Astrocyte of the cerebellum (primary cell): ENCODE measurements at regions of chr5 and their contacts with region 1.

Region 1: DNA sequence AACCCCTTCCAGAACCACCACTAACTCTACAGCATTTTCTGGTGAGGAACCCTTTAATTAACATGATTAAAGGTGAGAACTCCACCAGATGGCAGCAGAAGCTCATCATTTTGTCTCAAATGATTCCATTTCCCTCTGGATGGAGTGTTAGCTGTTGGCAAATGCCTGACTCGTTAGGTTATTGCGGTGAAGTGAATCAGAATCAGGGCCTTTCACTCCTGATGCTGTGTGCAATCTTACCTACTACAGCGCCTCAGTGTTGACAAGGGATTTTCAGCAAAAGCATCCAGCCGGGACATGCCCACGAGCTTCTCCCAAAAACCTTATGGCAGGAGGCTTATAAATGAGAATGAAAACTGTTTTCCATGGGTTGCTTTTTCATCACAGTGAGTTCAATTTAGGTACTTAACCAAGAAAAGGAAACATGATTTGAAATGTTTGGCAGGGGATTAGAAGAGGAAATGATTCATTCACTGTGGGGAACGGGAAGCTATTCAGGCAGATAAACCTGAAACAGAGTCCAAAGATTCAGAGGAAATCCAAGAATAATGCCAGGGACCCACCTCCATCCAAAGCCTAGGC is 48.0 kb upstream of the CAST start:
- DNase-seq: peak; percentile 94
- H3K4me3 ChIP-seq: peak overlapping the region; percentile 4
- CTCF ChIP-seq: peak; percentile 39

Region 2: DNA sequence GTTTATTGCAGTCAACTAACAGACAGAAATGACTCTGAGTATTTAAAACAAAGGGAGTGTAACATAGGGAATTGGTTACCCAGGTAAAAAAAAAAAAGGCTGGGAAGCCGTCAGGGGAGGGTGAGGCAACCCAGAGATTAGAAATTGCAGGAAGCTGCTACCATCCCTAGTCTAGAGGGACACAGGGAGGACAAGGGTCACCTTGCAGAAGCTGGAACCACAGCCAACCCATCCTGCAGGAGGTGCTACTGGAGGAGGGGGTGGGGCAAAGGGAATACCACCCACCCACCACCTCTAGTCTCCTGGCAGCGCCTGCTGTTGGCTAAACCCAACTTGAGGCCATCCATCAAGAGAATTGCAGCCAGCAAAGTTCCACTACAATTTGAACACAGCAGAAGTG is 54.5 kb after region 1 on chr5:
- in situ Hi-C with region 1: loop called (anchors 5 kb)
- DNase-seq: no peak
- H3K4me3 ChIP-seq: no peak overlapping the region
- CTCF ChIP-seq: no peak